Mucosa of descending colon (tissue), 3 donors: ENCODE measurements at regions of chr15 and their contacts with region 1.

Region 1: GRCh38 chr15:25381579-25381978 is 57.2 kb downstream of the UBE3A start:
- DNase-seq: no peak
- ATAC-seq: no peak
- H3K4me3 ChIP-seq: no peak overlapping the region
- H3K4me1 ChIP-seq: no peaks in the 10 kb centered on the region
- CTCF ChIP-seq: no peak

Region 2: GRCh38 chr15:25456196-25456595 is 74.6 kb after region 1 on chr15:
- intact Hi-C with region 1: loop called in 1 of 2 experiments (anchors 2 kb)
- DNase-seq: no peak
- ATAC-seq: no peak
- H3K4me3 ChIP-seq: no peak overlapping the region
- H3K4me1 ChIP-seq: no peaks in the 10 kb centered on the region
- CTCF ChIP-seq: no peak